Mammary epithelial cell (primary cell): ENCODE measurements at regions of chr2 and their contacts with region 1.

Region 1: DNA sequence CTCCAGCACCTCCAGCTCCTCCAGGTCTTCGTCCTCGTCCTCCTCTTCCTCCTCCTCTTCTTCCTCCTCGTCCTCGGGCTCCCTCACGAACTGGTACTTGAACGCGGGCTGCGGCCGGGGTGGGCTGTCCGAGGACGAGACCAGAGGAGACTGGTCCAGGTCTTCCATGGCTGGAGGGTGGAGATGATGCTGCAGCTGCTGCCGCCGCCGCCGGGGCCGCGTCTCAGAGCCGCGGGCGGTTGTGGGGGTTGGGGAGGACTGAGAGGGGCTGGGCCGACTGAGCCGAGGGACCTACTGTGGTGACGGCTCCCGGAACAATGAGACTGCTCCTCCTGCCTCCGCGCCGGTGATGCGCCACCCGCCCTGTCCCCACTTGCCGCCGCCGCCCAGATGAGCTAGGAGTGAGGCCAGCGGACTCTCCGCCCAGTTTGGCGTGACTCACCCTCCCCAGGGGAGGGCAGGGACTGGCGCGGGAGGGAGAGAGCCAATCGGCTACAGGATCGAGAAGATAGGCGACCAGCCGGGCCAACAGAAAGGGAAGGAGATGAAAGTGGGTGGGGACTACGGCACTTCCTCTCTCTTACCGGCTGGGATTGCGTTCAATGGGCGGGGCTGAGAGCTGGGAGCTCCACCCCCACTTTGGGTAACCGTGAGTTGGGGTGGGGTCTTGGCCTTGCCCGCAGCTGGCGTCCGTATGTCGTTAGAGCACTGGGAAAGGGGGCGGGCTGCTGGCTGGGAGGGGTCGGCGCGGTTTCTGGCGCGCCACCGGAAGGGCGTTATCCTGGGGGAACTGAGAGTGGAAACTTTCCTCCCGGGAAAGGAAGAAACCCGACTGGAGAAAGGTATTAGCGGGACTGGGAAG is at the start of gene RTN4:
- DNase-seq: peak; percentile 99
- H3K4me3 ChIP-seq: peak within 1 kb of the TSS; percentile 76 to 100 (median 98)
- H3K27ac ChIP-seq: peak within 1 kb of the TSS; percentile 99
- H3K4me1 ChIP-seq: peaks cover 10% of the 10 kb centered on the region
- H3K27me3 ChIP-seq: no peaks in the 10 kb centered on the region
- CTCF ChIP-seq: peak in 1 of 2 donors; percentile 9
- total RNA-seq, gene RTN4: 222 to 401 TPM

Region 2: DNA sequence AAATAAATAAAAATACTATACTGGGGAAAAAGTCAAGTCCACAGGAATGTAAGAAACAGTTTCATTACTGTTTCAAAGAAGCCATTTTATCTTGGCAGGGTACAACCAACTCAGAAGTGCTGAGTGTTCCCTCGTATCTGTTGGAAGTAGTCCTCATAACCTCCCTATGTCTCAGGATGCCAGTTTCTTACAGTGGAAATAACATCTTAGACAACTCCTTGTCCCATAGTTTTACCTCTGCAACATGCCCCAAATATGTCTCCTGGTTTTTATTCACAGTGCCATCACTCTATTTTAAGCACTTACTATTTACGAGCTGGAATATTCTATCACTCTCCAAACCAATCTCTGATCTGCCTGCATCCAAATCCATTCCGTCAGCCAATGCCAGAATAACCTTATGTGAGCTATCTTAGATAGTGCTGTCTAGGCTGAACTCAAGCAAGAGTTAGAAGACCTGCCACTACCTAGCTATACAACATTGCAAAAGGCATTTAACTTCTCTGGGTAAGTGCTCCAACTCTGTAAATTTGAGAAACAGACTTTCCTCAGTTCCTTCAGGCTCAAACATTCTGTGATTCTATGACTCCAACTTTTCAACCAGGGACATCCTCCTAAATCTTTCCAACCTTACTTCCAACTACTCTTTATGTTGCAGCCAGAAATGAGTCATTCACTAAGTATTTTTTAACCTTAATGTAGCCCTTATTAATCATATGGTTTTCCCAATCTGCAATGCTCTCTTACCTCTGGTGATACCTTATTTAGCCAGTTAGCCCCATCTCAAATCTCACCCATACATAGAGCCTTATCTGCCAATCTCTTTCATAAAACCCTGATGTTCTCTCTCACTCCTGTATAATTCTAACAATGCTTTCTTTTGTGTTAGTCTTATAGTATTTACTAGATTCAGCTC is 66.8 kb before region 1 on chr2:
- CTCF ChIA-PET with region 1: no interaction called
- dilution Hi-C with region 1: no loop called
- in situ Hi-C with region 1: no loop called
- intact Hi-C with region 1: loop called (anchors 2 kb)
- DNase-seq: peak; percentile 83
- H3K4me3 ChIP-seq: no peak overlapping the region
- H3K27ac ChIP-seq: peak overlapping the region; percentile 71
- H3K4me1 ChIP-seq: peaks cover 53% of the 10 kb centered on the region
- H3K27me3 ChIP-seq: no peaks in the 10 kb centered on the region
- CTCF ChIP-seq: no peak

Region 3: DNA sequence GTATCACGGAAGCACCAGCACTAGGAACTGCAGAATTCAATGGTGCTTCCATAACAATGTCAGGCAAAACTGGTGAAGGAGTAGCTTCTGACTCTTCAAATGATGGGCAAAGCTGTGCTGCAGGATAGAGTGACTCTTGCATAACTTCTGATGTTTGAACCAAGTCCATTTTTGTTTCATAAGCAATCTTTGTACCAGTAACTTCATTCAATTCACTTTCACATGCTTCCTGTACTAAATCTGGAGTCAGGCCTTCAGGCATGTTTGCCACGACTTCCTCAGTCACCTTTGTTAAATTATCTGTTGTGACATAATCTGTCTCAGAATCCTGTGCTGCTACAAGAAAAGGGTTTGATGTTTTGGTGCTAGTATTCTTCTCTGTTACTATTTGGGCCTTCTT is 24.2 kb before region 1 on chr2:
- CTCF ChIA-PET with region 1: interaction called, 5 read pairs
- dilution Hi-C with region 1: no loop called
- in situ Hi-C with region 1: no loop called
- intact Hi-C with region 1: loop called (anchors 2 kb)
- DNase-seq: peak; percentile 41
- H3K4me3 ChIP-seq: no peak overlapping the region
- H3K27ac ChIP-seq: peak overlapping the region; percentile 38
- H3K4me1 ChIP-seq: peaks cover 25% of the 10 kb centered on the region
- H3K27me3 ChIP-seq: no peaks in the 10 kb centered on the region
- CTCF ChIP-seq: no peak

Region 4: DNA sequence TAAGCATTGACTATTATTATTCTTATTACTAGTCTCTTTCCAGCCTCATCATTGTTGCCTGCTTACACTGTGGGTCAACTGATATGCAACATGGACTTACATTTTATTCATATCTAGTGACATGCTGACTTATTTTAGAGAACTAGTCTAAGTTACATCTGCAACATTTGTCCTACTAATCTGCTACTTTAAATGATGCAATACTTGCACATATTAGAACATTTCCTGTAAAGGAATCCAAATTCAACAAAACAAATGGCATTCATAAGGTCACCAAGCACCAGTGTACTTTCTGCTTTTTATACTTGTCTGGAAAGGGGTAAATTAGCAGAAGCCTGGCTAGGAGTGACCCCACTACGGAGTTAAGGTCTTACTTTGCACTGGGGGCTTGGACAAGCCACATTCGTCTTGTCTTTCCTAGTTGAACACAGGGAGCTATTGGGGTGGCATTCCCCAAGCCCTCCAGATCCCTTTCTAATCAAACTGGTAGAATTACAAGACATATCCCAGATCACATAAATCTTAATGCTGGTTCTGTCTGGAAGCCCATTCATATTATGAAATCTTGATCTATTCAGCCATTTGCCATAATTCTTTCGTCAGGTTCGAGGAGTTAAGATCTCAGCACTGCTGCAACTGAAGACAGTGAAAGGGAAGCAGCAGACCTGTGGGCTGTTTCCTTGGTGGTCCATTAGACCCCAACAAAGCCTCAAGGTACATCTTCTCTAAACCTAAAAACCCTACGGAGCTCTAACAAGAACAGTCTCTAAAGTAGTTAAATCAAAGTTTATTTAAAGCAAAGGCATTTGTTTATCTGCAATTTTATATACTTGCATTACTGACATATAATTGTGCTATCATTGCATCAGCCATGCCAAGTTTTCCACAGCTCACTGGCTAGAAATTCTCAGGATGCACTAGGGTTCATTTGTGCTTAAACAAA is 49.8 kb after region 1 on chr2:
- CTCF ChIA-PET with region 1: no interaction called
- dilution Hi-C with region 1: no loop called
- in situ Hi-C with region 1: no loop called
- intact Hi-C with region 1: loop called (anchors 1 kb)
- DNase-seq: no peak
- H3K4me3 ChIP-seq: no peak overlapping the region
- H3K27ac ChIP-seq: no peak overlapping the region
- H3K4me1 ChIP-seq: peaks cover 20% of the 10 kb centered on the region
- H3K27me3 ChIP-seq: no peaks in the 10 kb centered on the region
- CTCF ChIP-seq: no peak

Region 5: GRCh38 chr2:55159037-55159651 is 108.8 kb after region 1 on chr2:
- CTCF ChIA-PET with region 1: interaction called, 3 read pairs
- dilution Hi-C with region 1: no loop called
- in situ Hi-C with region 1: loop called in 1 of 2 experiments (anchors 10 kb)
- intact Hi-C with region 1: no loop called
- DNase-seq: no peak
- H3K4me3 ChIP-seq: no peak overlapping the region
- H3K27ac ChIP-seq: no peak overlapping the region
- H3K4me1 ChIP-seq: peaks cover 14% of the 10 kb centered on the region
- H3K27me3 ChIP-seq: no peaks in the 10 kb centered on the region
- CTCF ChIP-seq: no peak

Region 6: DNA sequence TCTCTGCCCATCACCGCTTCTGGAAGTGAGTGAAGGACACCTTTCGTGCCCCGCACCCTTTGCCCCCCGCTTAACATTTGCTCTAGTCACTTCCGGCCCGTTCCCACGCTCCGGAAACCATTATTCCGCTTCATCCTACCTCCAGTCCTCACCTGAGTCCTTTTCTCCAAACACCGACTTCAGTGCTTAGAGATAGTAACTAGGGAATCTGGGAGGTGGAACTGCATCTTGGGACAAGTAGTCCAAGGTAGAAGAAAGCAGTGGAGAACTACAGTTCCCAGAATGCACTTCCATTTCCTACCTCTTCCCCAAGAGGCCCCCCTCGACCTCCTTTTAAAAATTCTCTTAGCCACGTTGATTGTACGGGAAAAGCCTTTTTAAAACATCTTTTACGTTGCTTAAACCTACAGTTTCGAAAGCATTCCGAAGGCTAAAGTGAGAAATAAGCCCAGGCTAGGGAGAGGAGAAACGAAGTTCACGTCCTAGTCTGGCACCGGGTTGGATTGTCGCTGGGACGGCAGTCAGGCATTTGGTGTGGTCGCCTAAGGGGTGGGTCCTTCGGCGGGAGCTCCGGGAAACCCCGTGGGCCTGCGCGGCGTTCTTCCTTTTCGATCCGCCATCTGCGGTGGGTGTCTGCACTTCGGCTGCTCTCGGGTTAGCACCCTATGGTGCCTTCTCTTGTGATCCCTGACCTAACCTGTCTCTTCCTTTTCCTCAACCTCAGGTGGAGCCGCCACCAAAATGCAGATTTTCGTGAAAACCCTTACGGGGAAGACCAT is 181.9 kb after region 1 on chr2 and contains the starts of genes CLHC1 and RPS27A:
- CTCF ChIA-PET with region 1: no interaction called
- dilution Hi-C with region 1: no loop called
- in situ Hi-C with region 1: no loop called
- intact Hi-C with region 1: loop called (anchors 2 kb)
- DNase-seq: peak; percentile 95
- H3K4me3 ChIP-seq: peak within 1 kb of the TSS; percentile 63 to 99 (median 98)
- H3K27ac ChIP-seq: peak within 1 kb of the TSS; percentile 96
- H3K4me1 ChIP-seq: peaks cover 27% of the 10 kb centered on the region
- H3K27me3 ChIP-seq: no peaks in the 10 kb centered on the region
- CTCF ChIP-seq: no peak
- total RNA-seq, gene CLHC1: 7.7 to 17.1 TPM
- total RNA-seq, gene RPS27A: 572 to 897 TPM